ENCODE measurements at regions of chr20 and their contacts with region 1.

Region 1: DNA sequence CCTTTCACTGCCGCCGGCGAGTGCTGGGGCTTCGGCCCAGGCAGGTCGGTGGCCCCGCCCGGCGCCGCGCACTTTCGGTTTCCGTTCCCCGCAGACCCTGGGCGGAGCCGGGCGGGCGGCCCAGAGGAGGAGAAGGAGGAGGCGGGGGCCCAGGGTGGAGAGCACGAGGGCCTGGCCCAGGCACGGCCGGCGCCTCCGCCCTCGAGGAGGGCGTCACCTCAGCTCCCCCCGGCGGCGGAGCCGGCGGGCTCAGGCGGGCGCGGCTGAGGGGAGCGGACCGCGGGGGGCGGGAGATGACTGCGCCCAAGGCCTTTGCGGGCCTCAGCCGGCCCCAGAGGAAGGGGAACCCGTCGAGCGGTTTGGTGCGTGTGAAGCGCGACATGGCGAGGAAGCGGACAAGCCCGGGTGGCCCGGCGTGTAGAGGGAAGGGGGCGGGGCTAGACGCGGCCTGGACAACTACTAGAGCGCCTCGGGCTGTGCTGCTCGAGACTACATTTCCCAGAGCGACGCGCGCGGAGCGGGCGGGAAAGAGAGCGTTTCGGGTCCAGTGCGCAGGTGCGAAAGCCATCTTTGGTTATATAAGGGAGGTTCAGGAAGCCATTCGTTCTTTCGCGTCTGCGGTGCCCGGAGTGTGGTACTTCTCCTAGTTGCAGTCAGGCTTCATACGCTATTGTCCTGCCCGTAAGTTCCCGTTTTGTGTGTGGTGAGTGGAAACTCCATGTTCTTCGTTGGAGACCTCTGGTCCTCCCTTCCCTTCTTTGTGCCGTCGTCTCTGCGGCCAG is at the start of gene ZNFX1:
- DNase-seq: peak; percentile 99
- H3K4me3 ChIP-seq: peak within 1 kb of the TSS; percentile 86 to 92
- H3K4me3 Mint-ChIP-seq: peak within 1 kb of the TSS; percentile 93 to 99 (median 96)
- H3K27ac ChIP-seq: peak within 1 kb of the TSS; percentile 82
- H3K27ac Mint-ChIP-seq: peak within 1 kb of the TSS; percentile 96 to 99 (median 98)
- H3K4me1 ChIP-seq: peaks cover 70% of the 10 kb centered on the region
- H3K4me1 Mint-ChIP-seq: peaks cover 50 to 83% (median 63%) of the 10 kb centered on the region in 4 donors
- H3K27me3 ChIP-seq: no peaks in the 10 kb centered on the region
- H3K27me3 Mint-ChIP-seq: peaks cover 0 to 1% of the 10 kb centered on the region in 2 donors
- total RNA-seq, gene ZNFX1: 73.8 to 78.4 TPM

Region 2: DNA sequence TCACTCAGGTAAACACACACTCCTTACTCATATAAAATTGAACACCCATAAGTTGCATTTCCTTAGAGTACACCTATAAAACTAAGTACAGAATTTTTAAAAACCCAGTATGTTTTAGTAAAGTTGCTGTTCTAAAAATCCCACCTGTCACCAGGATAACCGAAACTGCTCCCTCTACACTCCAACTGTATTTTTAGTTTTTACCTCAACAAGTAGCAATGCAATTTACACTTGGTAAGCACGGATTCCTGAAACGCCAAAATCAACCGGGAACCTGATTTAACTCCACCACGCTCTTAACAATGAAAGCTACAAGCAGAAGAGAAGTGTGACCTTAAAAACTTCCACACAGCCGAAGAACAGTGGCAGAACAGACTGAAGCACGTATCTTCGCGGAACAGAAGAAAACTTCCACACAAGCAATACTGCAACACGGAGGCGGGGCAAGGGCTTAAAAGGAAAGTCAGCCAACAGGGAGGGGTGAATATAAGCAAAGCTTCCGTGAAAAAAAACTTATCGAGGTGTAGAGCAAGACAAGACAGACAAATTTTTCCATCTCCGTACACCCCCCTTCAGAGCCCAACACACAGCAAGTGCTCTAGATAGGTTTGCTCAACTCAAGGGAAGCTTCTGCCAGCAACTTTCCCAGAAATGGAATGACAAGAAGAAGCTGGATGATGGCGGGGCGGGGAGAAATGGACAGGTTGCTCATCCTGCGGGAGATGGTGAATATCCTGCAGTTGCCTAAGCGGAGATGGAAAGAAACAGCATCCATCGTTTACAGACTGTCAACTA is 91.5 kb before region 1 on chr20:
- CTCF ChIA-PET with region 1: no interaction called
- POLR2A ChIA-PET with region 1: interaction called, 22 read pairs
- intact Hi-C with region 1: loop called (anchors 1 kb)
- DNase-seq: peak; percentile 60 to 83 (median 68)
- H3K4me3 ChIP-seq: peak overlapping the region; percentile 49 to 82
- H3K4me3 Mint-ChIP-seq: peak overlapping the region; percentile 84 to 96 (median 90)
- H3K27ac ChIP-seq: peak overlapping the region; percentile 75
- H3K27ac Mint-ChIP-seq: peak overlapping the region; percentile 77 to 95 (median 93)
- H3K4me1 ChIP-seq: peaks cover 50% of the 10 kb centered on the region
- H3K4me1 Mint-ChIP-seq: peaks cover 35 to 59% (median 47%) of the 10 kb centered on the region in 4 donors
- H3K27me3 ChIP-seq: no peaks in the 10 kb centered on the region
- H3K27me3 Mint-ChIP-seq: peaks cover 0 to 2% of the 10 kb centered on the region in 2 donors

Region 3: GRCh38 chr20:49303065-49303552 is 24.9 kb after region 1 on chr20:
- CTCF ChIA-PET with region 1: interaction called, 3 read pairs
- POLR2A ChIA-PET with region 1: interaction called, 10 read pairs
- intact Hi-C with region 1: no loop called
- DNase-seq: no peak
- H3K4me3 ChIP-seq: no peak overlapping the region
- H3K4me3 Mint-ChIP-seq: peak overlapping the region in 1 of 8 donors; percentile 18
- H3K27ac ChIP-seq: no peak overlapping the region
- H3K27ac Mint-ChIP-seq: no peak overlapping the region
- H3K4me1 ChIP-seq: peaks cover 15% of the 10 kb centered on the region
- H3K4me1 Mint-ChIP-seq: peaks cover 10 to 23% (median 14%) of the 10 kb centered on the region in 4 donors
- H3K27me3 ChIP-seq: no peaks in the 10 kb centered on the region
- H3K27me3 Mint-ChIP-seq: no peaks in the 10 kb centered on the region

Region 4: GRCh38 chr20:49323622-49324238 is 45.5 kb after region 1 on chr20:
- CTCF ChIA-PET with region 1: no interaction called
- POLR2A ChIA-PET with region 1: interaction called, 19 read pairs
- intact Hi-C with region 1: loop called (anchors 2 kb)
- DNase-seq: peak; percentile 40 to 68 (median 60)
- H3K4me3 ChIP-seq: no peak overlapping the region
- H3K4me3 Mint-ChIP-seq: peak overlapping the region in 2 of 8 donors; percentile 14 to 51
- H3K27ac ChIP-seq: no peak overlapping the region
- H3K27ac Mint-ChIP-seq: peak overlapping the region in 6 of 7 donors; percentile 22 to 96 (median 92)
- H3K4me1 ChIP-seq: peaks cover 22% of the 10 kb centered on the region
- H3K4me1 Mint-ChIP-seq: peaks cover 18 to 27% (median 21%) of the 10 kb centered on the region in 4 donors
- H3K27me3 ChIP-seq: peaks cover 9% of the 10 kb centered on the region
- H3K27me3 Mint-ChIP-seq: peaks cover 19 to 30% of the 10 kb centered on the region in 2 donors

Region 5: DNA sequence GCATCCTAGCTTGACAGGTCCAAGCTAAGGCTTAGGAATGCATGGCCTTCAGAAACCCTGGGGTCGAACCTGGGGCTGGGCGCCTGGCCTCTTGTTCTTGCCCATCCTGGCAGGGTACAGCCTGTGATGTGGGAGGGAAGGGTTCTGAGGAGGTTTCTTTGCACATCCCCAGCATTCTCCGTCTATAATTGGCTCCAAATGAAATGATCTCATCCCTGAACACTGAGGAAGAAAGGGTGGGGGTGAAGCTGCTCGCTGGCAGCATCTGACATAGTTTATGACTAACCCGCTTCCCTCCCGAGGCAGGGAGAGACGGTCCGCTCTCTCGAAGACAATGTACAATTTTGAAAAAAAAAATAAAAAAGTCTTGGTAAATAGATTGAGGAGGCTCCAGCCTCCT is 66.7 kb after region 1 on chr20:
- CTCF ChIA-PET with region 1: no interaction called
- POLR2A ChIA-PET with region 1: no interaction called
- intact Hi-C with region 1: no loop called
- DNase-seq: no peak
- H3K4me3 ChIP-seq: no peak overlapping the region
- H3K4me3 Mint-ChIP-seq: no peak overlapping the region
- H3K27ac ChIP-seq: no peak overlapping the region
- H3K27ac Mint-ChIP-seq: no peak overlapping the region
- H3K4me1 ChIP-seq: no peaks in the 10 kb centered on the region
- H3K4me1 Mint-ChIP-seq: no peaks in the 10 kb centered on the region
- H3K27me3 ChIP-seq: no peaks in the 10 kb centered on the region
- H3K27me3 Mint-ChIP-seq: peaks cover 7 to 12% of the 10 kb centered on the region in 2 donors

Region 6: DNA sequence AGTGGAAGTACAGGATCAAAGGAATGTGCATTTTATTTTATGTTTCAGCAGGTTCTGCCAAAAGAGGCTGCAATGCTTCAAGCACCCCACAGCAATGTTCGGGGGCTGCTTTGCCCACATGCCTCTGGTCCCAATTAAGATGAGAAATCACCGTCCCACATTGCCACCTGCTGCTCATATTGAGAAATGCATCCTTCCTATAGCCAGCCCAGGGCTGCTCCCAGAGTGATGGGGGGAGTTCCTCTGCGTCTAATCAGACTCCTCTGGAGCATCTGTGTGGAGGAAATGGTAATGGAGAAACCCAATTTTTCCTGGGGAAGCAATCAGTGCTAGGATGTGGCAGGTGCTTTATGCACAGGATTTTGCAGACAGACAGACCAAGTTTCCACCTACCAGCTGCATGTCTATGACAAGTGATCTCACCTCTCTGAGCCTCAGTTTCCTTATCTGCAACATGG is 256.1 kb after region 1 on chr20:
- CTCF ChIA-PET with region 1: no interaction called
- POLR2A ChIA-PET with region 1: no interaction called
- intact Hi-C with region 1: no loop called
- DNase-seq: peak; percentile 39 to 54 (median 43)
- H3K4me3 ChIP-seq: no peak overlapping the region
- H3K4me3 Mint-ChIP-seq: peak overlapping the region in 2 of 8 donors; percentile 40 to 61
- H3K27ac ChIP-seq: no peak overlapping the region
- H3K27ac Mint-ChIP-seq: peak overlapping the region in 1 of 7 donors; percentile 18
- H3K4me1 ChIP-seq: peaks cover 11% of the 10 kb centered on the region
- H3K4me1 Mint-ChIP-seq: peaks cover 4 to 15% (median 11%) of the 10 kb centered on the region in 4 donors
- H3K27me3 ChIP-seq: no peaks in the 10 kb centered on the region
- H3K27me3 Mint-ChIP-seq: peaks cover 2 to 6% of the 10 kb centered on the region in 2 donors